Heart right ventricle (tissue), 16 donors: ENCODE measurements at regions of chr18 and their contacts with region 1.

Region 1: DNA sequence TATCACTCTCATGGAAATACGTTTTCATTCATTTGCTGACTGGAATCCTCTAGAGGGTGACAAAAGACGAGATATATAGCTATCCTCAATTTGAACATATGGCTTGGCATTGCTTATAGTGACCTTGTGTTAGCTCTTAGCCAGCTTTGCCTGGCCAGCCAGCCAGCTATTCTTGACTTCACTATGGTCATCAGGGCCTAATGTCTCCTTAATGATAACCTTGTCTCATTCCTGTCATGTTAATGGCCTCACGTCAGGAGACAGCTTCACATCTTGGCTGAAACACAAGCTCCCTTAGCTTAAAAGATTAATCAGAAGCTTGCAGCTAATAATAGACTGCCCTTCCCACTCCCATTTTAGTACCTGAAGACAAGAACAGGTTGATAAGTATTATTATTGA is 1517.5 kb upstream of the PIK3C3 start:
- DNase-seq: peak; percentile 30 to 33
- ATAC-seq: peak; percentile 42 to 99 (median 95)
- H3K4me3 ChIP-seq: no peak overlapping the region
- H3K27ac ChIP-seq: peak overlapping the region in 7 of 10 donors; percentile 1 to 72 (median 48)
- H3K4me1 ChIP-seq: peaks cover 0 to 13% (median 0%) of the 10 kb centered on the region in 9 donors
- H3K27me3 ChIP-seq: no peaks in the 10 kb centered on the region
- CTCF ChIP-seq: peak in 1 of 9 donors; percentile 10

Region 2: DNA sequence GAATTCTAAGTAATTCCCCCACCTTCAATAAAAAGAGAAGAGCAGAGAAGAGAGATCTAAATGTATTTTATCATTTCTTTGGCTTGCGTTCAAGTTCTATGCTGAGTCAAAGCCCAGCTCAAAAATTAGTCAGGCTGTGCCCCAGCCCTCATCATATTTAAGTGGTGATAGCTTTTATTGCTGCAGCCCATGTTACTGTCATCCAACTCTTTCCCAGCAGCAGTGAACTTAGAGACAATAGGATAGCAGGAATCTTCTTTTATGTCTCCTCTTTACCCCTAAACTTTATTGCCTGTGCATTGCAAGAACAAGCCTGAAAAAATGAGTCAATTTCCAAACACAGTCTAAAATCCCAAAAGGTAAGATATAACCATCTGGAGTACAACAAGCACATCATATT is 81.8 kb before region 1 on chr18:
- intact Hi-C with region 1: no loop called
- DNase-seq: no peak
- ATAC-seq: no peak
- H3K4me3 ChIP-seq: no peak overlapping the region
- H3K27ac ChIP-seq: no peak overlapping the region
- H3K4me1 ChIP-seq: no peaks in the 10 kb centered on the region
- H3K27me3 ChIP-seq: no peaks in the 10 kb centered on the region
- CTCF ChIP-seq: no peak

Region 3: GRCh38 chr18:40450751-40451150 is 13.2 kb after region 1 on chr18:
- intact Hi-C with region 1: no loop called
- DNase-seq: no peak
- ATAC-seq: no peak
- H3K4me3 ChIP-seq: no peak overlapping the region
- H3K27ac ChIP-seq: no peak overlapping the region
- H3K4me1 ChIP-seq: no peaks in the 10 kb centered on the region
- H3K27me3 ChIP-seq: no peaks in the 10 kb centered on the region
- CTCF ChIP-seq: no peak

Region 4: DNA sequence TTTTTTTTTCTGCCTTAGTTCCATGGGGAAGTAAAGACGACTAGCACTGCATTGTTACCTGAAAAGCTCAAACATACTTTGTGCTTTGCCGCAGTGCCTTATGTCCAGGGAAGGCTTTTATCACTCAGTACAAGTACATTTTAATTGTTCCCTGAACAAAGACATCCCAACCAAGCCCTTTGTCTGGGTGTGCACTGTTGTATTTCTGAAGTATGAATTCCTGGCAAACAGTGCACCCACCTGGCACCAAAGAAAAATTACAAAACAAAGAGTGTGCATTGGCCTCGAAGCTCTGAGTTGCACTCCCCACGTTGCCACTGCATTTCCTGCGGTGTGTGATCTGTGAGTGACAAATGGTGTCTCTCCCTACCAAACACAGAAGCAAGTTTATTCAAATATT is 659.0 kb after region 1 on chr18:
- intact Hi-C with region 1: loop called in 1 of 10 experiments (anchors 5 kb)
- DNase-seq: no peak
- ATAC-seq: peak in 1 of 8 donors; percentile 77
- H3K4me3 ChIP-seq: no peak overlapping the region
- H3K27ac ChIP-seq: no peak overlapping the region
- H3K4me1 ChIP-seq: no peaks in the 10 kb centered on the region
- H3K27me3 ChIP-seq: no peaks in the 10 kb centered on the region
- CTCF ChIP-seq: peak in 1 of 9 donors; percentile 21

Region 5: DNA sequence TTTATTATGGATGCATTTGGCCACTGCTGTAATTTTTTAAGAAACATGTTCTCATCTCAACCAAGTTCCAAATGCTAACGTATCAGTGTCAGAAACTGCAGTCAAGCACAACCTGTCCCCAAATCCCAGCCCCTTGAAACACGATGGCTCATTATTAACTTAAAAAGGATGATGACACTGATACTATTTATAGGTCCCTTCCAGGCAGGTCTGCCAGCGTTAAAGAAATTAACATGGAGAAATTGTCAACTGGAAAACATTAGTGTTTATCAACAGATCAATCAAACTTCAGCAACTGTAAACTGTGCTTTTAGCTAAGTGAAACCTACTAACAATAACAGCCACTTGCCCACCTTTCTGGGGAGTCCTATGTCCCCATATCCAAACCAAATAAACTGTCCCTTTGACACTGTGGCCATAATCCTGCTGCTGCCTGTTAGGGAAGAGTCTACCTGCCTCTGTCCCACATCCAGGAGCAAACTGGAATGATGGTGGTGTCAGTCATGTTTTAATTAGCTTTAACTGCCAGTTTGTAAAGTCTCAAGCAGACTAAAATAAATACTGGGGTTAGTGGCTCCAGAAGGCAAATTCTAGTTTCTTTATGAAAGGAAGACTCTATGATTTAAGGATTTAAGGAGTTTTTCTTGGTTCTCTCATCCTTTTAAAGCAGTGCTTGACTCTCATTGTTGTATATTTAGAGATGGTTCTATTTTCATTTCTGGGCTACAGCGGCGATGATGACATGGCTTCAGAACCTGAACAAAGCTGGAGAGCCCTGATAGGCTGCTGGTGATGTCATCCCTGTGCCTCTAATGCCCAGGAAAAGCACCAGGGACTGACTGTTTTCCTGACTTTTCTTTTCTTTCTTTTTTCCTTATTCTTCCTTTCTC is 933.9 kb after region 1 on chr18:
- intact Hi-C with region 1: loop called in 2 of 10 experiments (anchors 2 to 10 kb)
- DNase-seq: peak in 1 of 2 donors; percentile 6
- ATAC-seq: peak in 5 of 8 donors; percentile 52 to 94 (median 67)
- H3K4me3 ChIP-seq: no peak overlapping the region
- H3K27ac ChIP-seq: peak overlapping the region in 3 of 10 donors; percentile 29 to 62 (median 55)
- H3K4me1 ChIP-seq: peaks cover 0 to 5% (median 0%) of the 10 kb centered on the region in 9 donors
- H3K27me3 ChIP-seq: no peaks in the 10 kb centered on the region
- CTCF ChIP-seq: no peak

Region 6: GRCh38 chr18:41378598-41378997 is 941.1 kb after region 1 on chr18:
- intact Hi-C with region 1: loop called in 1 of 10 experiments (anchors 10 kb)
- DNase-seq: no peak
- ATAC-seq: no peak
- H3K4me3 ChIP-seq: no peak overlapping the region
- H3K27ac ChIP-seq: no peak overlapping the region
- H3K4me1 ChIP-seq: no peaks in the 10 kb centered on the region
- H3K27me3 ChIP-seq: no peaks in the 10 kb centered on the region
- CTCF ChIP-seq: peak in 2 of 9 donors; percentile 9 to 33